ENCODE measurements at regions of chr6 and their contacts with region 1.

Region 1: DNA sequence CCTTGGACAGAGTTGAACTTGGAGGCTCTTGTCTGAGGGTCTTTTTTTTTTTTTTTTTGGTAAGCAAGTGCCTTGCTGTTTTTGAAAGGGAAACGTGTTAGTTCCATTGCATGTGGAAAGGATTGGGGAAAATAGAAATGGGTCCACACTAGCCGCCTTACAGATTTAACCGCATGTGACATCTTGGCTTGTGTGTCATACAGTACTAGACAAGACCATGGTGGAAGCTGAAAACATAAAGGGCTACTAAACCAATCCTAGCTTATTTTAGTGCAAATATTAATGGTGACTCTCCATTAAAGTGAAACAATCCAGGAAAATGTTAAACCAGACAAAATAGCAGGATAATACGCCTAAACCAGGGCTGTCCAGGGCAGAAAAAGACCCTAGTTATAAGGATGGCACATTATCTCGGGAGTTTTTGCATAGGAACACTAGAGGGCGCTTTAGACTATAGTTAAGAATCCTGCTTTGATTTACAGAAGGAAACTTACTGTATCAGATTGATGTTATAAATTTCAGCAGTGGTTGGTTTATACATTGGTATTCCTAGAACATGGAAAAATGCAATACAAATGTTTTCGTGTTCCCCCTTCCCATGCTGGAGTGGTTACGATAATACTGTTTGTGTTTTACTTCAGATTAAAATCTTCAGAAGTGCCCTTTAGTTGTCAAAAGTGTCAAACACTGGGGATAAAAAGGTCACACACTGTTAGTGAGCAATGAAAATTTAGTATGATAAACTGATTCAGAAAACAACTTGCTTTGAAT is 59.8 kb upstream of the DEK start:
- DNase-seq: peak; percentile 74
- ATAC-seq: peak; percentile 50
- H3K4me3 ChIP-seq: no peak overlapping the region
- H3K4me3 Mint-ChIP-seq: no peak overlapping the region
- H3K27ac ChIP-seq: no peak overlapping the region
- H3K27ac Mint-ChIP-seq: no peak overlapping the region
- H3K4me1 ChIP-seq: peaks cover 14 to 21% of the 10 kb centered on the region in 2 donors
- H3K4me1 Mint-ChIP-seq: peaks cover 33% of the 10 kb centered on the region
- H3K27me3 ChIP-seq: no peaks in the 10 kb centered on the region
- H3K27me3 Mint-ChIP-seq: no peaks in the 10 kb centered on the region
- CTCF ChIP-seq: peak; percentile 91

Region 2: DNA sequence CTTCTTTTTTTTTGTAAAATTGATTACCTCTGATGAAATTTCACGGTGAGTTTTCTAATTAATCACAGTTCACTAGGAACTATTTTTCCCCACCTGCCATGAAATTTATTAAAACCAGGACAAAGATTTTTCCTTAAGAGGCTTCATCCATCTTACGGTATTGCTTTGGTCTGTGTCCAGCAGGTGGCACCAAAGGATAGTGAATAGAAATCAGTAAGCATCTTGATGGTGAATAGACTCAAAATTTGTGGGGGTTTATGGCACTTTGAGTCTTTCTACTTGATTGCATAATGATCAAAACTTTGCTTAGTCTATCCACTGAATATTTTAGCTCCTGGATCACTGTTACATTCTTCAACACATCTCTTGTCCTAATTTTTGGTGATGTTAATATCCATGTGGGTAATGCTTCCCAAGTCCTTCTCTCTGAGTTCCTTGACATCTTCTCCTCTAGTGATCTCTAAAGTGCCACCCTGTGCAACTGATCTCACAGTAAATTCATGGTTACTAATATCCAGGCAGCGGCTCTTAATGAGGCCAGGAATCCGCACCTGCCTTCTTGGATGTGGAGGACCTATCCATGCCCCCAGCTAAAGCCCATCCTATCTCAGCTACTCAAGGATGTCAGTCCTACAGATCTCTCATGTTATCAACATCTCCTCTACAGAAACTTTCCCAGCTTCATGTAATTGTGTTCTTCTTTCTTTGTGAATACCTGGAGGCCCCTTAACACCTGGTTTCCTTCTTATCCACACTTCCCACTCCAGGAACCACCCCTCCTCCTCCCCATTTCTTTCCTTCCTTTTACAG is 1167.8 kb before region 1 on chr6:
- CTCF ChIA-PET with region 1: interaction called, 3 read pairs
- POLR2A ChIA-PET with region 1: no interaction called
- intact Hi-C with region 1: loop called (anchors 5 kb)
- DNase-seq: peak; percentile 70
- ATAC-seq: no peak
- H3K4me3 ChIP-seq: no peak overlapping the region
- H3K4me3 Mint-ChIP-seq: no peak overlapping the region
- H3K27ac ChIP-seq: no peak overlapping the region
- H3K27ac Mint-ChIP-seq: no peak overlapping the region
- H3K4me1 ChIP-seq: no peaks in the 10 kb centered on the region
- H3K4me1 Mint-ChIP-seq: no peaks in the 10 kb centered on the region
- H3K27me3 ChIP-seq: no peaks in the 10 kb centered on the region
- H3K27me3 Mint-ChIP-seq: peaks cover 12% of the 10 kb centered on the region
- CTCF ChIP-seq: peak; percentile 90

Region 3: GRCh38 chr6:17367868-17368267 is 956.3 kb before region 1 on chr6:
- CTCF ChIA-PET with region 1: no interaction called
- POLR2A ChIA-PET with region 1: no interaction called
- intact Hi-C with region 1: no loop called
- DNase-seq: no peak
- ATAC-seq: no peak
- H3K4me3 ChIP-seq: no peak overlapping the region
- H3K4me3 Mint-ChIP-seq: no peak overlapping the region
- H3K27ac ChIP-seq: no peak overlapping the region
- H3K27ac Mint-ChIP-seq: no peak overlapping the region
- H3K4me1 ChIP-seq: no peaks in the 10 kb centered on the region
- H3K4me1 Mint-ChIP-seq: no peaks in the 10 kb centered on the region
- H3K27me3 ChIP-seq: no peaks in the 10 kb centered on the region
- H3K27me3 Mint-ChIP-seq: no peaks in the 10 kb centered on the region
- CTCF ChIP-seq: no peak

Region 4: DNA sequence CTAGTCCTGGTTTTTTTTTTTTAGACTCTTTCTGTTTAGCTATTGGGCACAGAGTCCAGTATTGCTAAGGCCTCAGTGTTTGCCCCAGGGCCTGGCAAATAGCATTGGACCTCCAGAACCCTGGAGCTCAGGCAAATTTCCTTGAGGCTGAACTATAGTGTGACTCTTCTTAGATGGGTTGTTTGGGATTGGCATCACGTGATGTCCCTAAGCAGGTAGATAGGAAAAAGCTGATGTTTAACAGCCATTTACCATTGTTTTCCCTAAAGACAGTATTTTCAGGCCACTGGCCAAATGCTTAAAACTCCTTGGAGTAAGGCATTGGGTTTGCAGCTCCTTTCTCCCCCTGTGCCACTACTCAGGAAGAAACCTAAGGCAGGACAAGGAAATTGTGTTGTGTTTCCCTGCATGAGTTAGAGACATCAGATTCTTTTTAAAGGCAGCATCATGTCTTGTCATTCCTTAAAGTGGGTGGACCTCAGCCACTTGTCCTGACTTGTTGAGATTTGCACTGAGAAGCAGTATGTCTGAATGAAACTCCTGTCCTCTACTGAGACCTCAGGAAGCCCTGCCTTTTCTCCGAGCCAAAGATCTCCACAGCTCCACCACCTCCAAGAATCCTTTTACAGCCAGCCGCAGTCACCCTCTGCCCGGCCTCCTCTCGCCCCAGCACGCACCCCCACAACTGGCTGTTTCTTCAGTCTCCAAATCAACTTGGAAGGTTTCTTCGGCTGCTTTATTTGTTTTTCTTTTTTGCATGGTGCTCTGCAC is 16.8 kb after region 1 on chr6:
- CTCF ChIA-PET with region 1: interaction called, 10 read pairs
- POLR2A ChIA-PET with region 1: no interaction called
- intact Hi-C with region 1: no loop called
- DNase-seq: no peak
- ATAC-seq: no peak
- H3K4me3 ChIP-seq: no peak overlapping the region
- H3K4me3 Mint-ChIP-seq: no peak overlapping the region
- H3K27ac ChIP-seq: no peak overlapping the region
- H3K27ac Mint-ChIP-seq: no peak overlapping the region
- H3K4me1 ChIP-seq: peaks cover 12 to 19% of the 10 kb centered on the region in 2 donors
- H3K4me1 Mint-ChIP-seq: peaks cover 33% of the 10 kb centered on the region
- H3K27me3 ChIP-seq: no peaks in the 10 kb centered on the region
- H3K27me3 Mint-ChIP-seq: no peaks in the 10 kb centered on the region
- CTCF ChIP-seq: no peak

Region 5: DNA sequence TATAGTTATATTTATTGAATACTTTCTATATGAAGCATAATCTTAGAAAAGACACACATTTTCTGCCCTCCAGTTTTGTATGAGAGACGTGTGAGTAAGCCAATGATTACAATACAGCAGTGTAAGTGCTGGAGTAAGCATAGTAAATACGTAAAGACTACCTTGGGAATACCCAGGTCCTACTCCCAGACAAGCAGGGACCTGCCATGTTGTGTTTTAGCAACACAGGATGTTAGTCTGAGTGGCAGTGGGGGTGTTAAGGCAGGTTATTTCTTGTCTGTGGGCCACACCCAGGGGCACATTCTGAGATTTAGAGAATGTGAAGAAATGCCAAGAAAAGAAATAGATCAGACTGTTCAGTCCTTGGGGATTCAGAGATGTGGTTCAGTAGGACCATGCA is 28.7 kb after region 1 on chr6:
- CTCF ChIA-PET with region 1: no interaction called
- POLR2A ChIA-PET with region 1: no interaction called
- intact Hi-C with region 1: no loop called
- DNase-seq: no peak
- ATAC-seq: no peak
- H3K4me3 ChIP-seq: no peak overlapping the region
- H3K4me3 Mint-ChIP-seq: no peak overlapping the region
- H3K27ac ChIP-seq: no peak overlapping the region
- H3K27ac Mint-ChIP-seq: no peak overlapping the region
- H3K4me1 ChIP-seq: peaks cover 11% of the 10 kb centered on the region in 2 donors
- H3K4me1 Mint-ChIP-seq: peaks cover 13% of the 10 kb centered on the region
- H3K27me3 ChIP-seq: no peaks in the 10 kb centered on the region
- H3K27me3 Mint-ChIP-seq: no peaks in the 10 kb centered on the region
- CTCF ChIP-seq: no peak

Region 6: DNA sequence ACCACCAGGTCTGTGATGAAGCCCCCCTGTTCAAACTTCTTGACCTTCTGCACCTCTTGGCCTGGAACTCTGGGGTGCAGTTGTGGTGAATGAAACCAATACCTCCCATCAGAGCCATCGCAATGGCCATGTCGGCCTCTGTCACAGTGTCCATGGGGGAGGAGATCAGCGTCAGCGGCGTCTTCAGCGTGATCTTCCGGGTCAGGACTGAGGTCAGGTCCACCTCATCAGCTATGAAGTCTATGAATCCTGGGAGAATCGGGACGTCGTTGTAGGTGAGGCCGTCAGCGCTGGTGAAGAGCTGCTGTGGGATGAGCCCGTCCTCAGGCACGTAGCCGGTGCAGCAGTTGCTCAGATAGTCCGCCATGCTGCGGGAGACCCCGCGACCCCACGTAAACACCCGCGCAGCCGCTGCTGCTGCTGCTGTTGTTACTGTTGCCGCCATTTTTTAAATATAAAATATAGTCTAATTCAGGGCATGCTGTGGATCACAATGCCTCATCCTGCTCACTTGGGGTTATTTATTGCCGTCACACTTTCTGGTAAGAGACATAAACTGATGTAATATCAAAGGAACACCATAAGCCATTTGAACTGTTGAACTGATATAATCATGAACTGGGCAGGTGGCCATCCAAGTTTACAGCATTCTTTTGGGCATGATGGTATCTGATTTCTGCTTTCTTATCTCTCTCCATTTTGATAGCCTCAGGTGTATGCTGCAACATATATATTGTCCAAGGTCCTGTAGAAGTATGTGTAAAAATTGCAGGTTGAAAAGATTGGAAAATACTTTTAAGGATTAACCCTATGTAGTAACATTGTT is 44.4 kb after region 1 on chr6:
- CTCF ChIA-PET with region 1: no interaction called
- POLR2A ChIA-PET with region 1: no interaction called
- intact Hi-C with region 1: no loop called
- DNase-seq: no peak
- ATAC-seq: no peak
- H3K4me3 ChIP-seq: no peak overlapping the region
- H3K4me3 Mint-ChIP-seq: no peak overlapping the region
- H3K27ac ChIP-seq: no peak overlapping the region
- H3K27ac Mint-ChIP-seq: no peak overlapping the region
- H3K4me1 ChIP-seq: no peaks in the 10 kb centered on the region
- H3K4me1 Mint-ChIP-seq: no peaks in the 10 kb centered on the region
- H3K27me3 ChIP-seq: no peaks in the 10 kb centered on the region
- H3K27me3 Mint-ChIP-seq: no peaks in the 10 kb centered on the region
- CTCF ChIP-seq: no peak

Region 7: GRCh38 chr6:18387061-18387721 is 63.1 kb after region 1 on chr6 and contains the start of gene RNF144B:
- CTCF ChIA-PET with region 1: interaction called, 14 read pairs
- POLR2A ChIA-PET with region 1: no interaction called
- intact Hi-C with region 1: no loop called
- DNase-seq: peak; percentile 84
- ATAC-seq: peak; percentile 95
- H3K4me3 ChIP-seq: peak within 1 kb of the TSS; percentile 72 to 100 (median 92)
- H3K4me3 Mint-ChIP-seq: peak within 1 kb of the TSS; percentile 99
- H3K27ac ChIP-seq: peak within 1 kb of the TSS; percentile 60 to 77
- H3K27ac Mint-ChIP-seq: peak within 1 kb of the TSS; percentile 95
- H3K4me1 ChIP-seq: peaks cover 32 to 35% of the 10 kb centered on the region in 2 donors
- H3K4me1 Mint-ChIP-seq: peaks cover 56% of the 10 kb centered on the region
- H3K27me3 ChIP-seq: no peaks in the 10 kb centered on the region
- H3K27me3 Mint-ChIP-seq: no peaks in the 10 kb centered on the region
- CTCF ChIP-seq: no peak
- total RNA-seq, gene RNF144B: 17.0 and 21.4 TPM in 2 replicates

Region 8: GRCh38 chr6:18400831-18401446 is 76.8 kb after region 1 on chr6:
- CTCF ChIA-PET with region 1: interaction called, 4 read pairs
- POLR2A ChIA-PET with region 1: interaction called, 3 read pairs
- intact Hi-C with region 1: loop called (anchors 5 kb)
- DNase-seq: peak; percentile 73
- ATAC-seq: peak; percentile 90
- H3K4me3 ChIP-seq: peak overlapping the region in 2 of 5 experiments; percentile 7 to 11
- H3K4me3 Mint-ChIP-seq: peak overlapping the region; percentile 70
- H3K27ac ChIP-seq: peak overlapping the region; percentile 54 to 84
- H3K27ac Mint-ChIP-seq: peak overlapping the region; percentile 90
- H3K4me1 ChIP-seq: peaks cover 23 to 39% of the 10 kb centered on the region in 2 donors
- H3K4me1 Mint-ChIP-seq: peaks cover 40% of the 10 kb centered on the region
- H3K27me3 ChIP-seq: no peaks in the 10 kb centered on the region
- H3K27me3 Mint-ChIP-seq: no peaks in the 10 kb centered on the region
- CTCF ChIP-seq: no peak

Region 9: DNA sequence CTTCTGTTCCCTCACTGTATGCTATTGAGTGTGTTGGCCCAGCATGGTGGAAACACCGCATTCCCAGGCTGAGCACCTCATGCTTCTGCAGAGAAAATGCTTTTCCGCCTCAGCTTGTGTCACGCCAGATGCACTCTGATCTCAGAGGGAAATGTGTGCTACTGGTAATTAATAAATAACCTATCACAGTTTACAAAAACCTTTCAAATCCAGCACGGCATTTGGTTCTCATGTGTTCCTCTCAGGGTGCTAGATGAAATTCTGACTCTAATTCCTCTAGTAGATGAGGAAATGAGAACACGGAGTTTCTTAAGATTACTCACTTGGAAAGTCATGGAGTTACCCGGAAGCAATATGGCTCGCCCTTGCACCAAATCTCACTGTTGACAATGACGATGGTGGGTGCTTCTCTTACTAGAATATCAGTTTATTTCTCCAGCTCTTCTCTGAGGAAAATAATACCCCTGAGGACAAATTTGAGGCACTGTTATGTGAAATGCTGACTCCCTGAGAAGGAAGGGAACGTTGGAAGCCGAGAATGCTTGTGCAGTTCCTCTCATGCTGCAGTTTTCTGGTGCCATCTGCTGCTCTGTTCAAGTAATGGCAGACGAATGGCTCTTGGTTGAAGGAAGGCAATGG is 179.6 kb after region 1 on chr6:
- CTCF ChIA-PET with region 1: interaction called, 379 read pairs
- POLR2A ChIA-PET with region 1: no interaction called
- intact Hi-C with region 1: loop called (anchors 1 kb)
- DNase-seq: peak; percentile 74
- ATAC-seq: peak; percentile 79
- H3K4me3 ChIP-seq: peak overlapping the region in 3 of 5 experiments; percentile 22 to 41 (median 40)
- H3K4me3 Mint-ChIP-seq: peak overlapping the region; percentile 74
- H3K27ac ChIP-seq: no peak overlapping the region
- H3K27ac Mint-ChIP-seq: no peak overlapping the region
- H3K4me1 ChIP-seq: peaks cover 7 to 17% of the 10 kb centered on the region in 2 donors
- H3K4me1 Mint-ChIP-seq: peaks cover 12% of the 10 kb centered on the region
- H3K27me3 ChIP-seq: no peaks in the 10 kb centered on the region
- H3K27me3 Mint-ChIP-seq: no peaks in the 10 kb centered on the region
- CTCF ChIP-seq: peak; percentile 97

Region 10: DNA sequence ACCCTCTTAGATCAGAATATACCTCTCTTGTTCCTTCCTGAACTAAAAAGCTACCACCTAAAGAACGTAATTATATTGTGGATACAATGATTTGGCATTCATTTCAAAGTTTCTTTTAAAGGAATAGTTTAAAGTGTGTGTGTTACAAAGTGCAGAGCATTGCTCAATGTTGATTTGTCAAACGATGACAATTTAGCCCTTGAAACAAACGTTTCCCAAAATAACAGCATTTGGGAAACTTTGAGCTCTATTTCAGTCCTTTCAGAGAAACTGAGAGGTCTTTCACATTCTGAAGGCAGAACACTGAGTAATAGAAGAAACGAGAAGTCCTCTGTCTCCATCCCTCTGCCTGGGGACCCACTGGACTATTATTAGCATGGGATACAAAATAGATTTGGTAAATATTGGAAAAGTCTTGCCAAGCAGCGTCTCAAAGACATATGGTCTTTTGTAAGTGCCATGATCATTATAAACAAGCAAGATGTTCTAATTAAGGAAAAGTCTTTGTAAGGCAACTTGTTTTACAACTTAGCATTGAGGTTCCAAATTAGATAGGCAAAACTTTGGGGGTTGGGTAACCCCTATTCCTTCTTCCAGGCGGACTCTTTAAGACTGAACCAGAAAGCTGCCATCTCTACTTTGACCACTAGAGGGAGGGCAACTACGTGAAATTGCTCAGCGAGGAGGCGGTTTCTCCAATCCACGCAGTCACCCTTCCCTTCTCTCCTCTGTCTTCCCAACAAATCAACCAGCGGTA is 271.8 kb after region 1 on chr6:
- CTCF ChIA-PET with region 1: interaction called, 4 read pairs
- POLR2A ChIA-PET with region 1: no interaction called
- intact Hi-C with region 1: loop called (anchors 2 kb)
- DNase-seq: peak; percentile 54
- ATAC-seq: peak; percentile 51
- H3K4me3 ChIP-seq: no peak overlapping the region
- H3K4me3 Mint-ChIP-seq: no peak overlapping the region
- H3K27ac ChIP-seq: no peak overlapping the region
- H3K27ac Mint-ChIP-seq: no peak overlapping the region
- H3K4me1 ChIP-seq: no peaks in the 10 kb centered on the region
- H3K4me1 Mint-ChIP-seq: peaks cover 3% of the 10 kb centered on the region
- H3K27me3 ChIP-seq: peaks cover 0 to 4% (median 0%) of the 10 kb centered on the region in 4 experiments
- H3K27me3 Mint-ChIP-seq: peaks cover 23% of the 10 kb centered on the region
- CTCF ChIP-seq: peak; percentile 98